Activated CD4-positive, alpha-beta memory T cell treated with anti-CD3 and anti-CD28 coated beads, Interleukin-2, amount 10 ng/mL, durations not matched to agents 7 days and 5 days (primary cell): ENCODE measurements at regions of chr20 and their contacts with region 1.

Region 1: GRCh38 chr20:37007898-37008649 is 56.6 kb upstream of the SAMHD1 start:
- DNase-seq: peak; percentile 24
- H3K4me3 Mint-ChIP-seq: no peak overlapping the region
- H3K27ac Mint-ChIP-seq: peak overlapping the region; percentile 75
- H3K4me1 Mint-ChIP-seq: peaks cover 19% of the 10 kb centered on the region
- H3K27me3 Mint-ChIP-seq: no peaks in the 10 kb centered on the region

Region 2: DNA sequence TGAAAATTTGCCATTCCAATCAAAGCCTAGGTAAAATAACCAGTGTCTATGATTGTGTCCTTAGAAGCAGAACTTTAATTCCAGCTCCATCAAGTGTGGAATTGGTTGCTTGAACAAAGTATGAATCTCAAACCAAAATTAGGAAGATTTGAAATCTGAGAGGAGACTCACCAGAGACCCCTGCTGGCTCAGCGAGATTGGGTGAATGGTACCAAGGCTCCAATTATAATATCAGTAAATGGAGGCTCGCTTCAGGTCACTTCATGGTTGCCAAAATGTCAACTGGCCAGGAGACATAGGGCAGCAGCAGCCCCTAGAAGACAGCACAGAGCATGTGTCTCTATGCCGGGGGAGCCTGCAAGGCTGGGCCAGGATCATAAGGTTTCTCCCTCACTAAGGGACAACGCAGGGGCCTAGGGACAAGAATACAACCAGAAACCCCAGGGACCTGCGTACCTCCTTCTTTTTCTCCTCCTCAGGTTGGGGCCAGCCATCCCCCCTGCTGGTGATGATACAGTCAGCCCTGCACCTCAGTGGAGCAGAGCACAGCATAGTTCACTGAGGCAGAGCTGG is 73.7 kb after region 1 on chr20:
- CTCF ChIA-PET with region 1: interaction called, 17 read pairs
- POLR2A ChIA-PET with region 1: interaction called, 3 read pairs
- DNase-seq: peak; percentile 25
- H3K4me3 Mint-ChIP-seq: no peak overlapping the region
- H3K27ac Mint-ChIP-seq: no peak overlapping the region
- H3K4me1 Mint-ChIP-seq: peaks cover 27% of the 10 kb centered on the region
- H3K27me3 Mint-ChIP-seq: no peaks in the 10 kb centered on the region